Activated CD8-positive, alpha-beta T cell treated with anti-CD3 and anti-CD28 coated beads for 36 hours (primary cell): ENCODE measurements at regions of chr14 and their contacts with region 1.

Region 1: DNA sequence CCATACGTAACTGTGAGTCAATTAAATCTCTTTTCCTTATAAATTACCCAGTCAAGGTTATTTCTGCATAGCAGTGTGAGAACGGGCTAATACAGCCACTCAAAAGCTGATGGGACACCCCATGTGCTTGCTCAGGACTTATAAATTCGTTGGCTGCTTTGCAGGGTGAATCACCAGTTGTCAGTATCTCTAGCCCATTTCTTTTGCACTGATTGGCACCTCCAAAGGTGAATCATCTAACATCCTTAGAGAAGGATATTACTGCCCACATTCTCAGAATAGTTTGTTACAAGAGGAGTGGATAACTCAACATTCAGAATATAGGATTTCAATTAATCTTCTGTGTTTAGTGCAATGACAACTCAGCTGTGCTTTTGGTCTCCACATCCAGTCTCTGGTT is 601.5 kb downstream of the KCNH5 start:
- DNase-seq: no peak
- ATAC-seq: no peak
- H3K4me3 Mint-ChIP-seq: no peak overlapping the region
- H3K27ac Mint-ChIP-seq: no peak overlapping the region
- H3K4me1 Mint-ChIP-seq: no peaks in the 10 kb centered on the region
- H3K27me3 Mint-ChIP-seq: no peaks in the 10 kb centered on the region
- CTCF ChIP-seq: no peak

Region 2: GRCh38 chr14:62497708-62498107 is 53.9 kb after region 1 on chr14:
- CTCF ChIA-PET with region 1: no interaction called
- POLR2A ChIA-PET with region 1: no interaction called
- intact Hi-C with region 1: loop called (anchors 2 kb)
- DNase-seq: no peak
- ATAC-seq: no peak
- H3K4me3 Mint-ChIP-seq: no peak overlapping the region
- H3K27ac Mint-ChIP-seq: no peak overlapping the region
- H3K4me1 Mint-ChIP-seq: no peaks in the 10 kb centered on the region
- H3K27me3 Mint-ChIP-seq: no peaks in the 10 kb centered on the region
- CTCF ChIP-seq: no peak

Region 3: GRCh38 chr14:62604524-62604923 is 160.7 kb after region 1 on chr14:
- CTCF ChIA-PET with region 1: no interaction called
- POLR2A ChIA-PET with region 1: no interaction called
- intact Hi-C with region 1: no loop called
- DNase-seq: no peak
- ATAC-seq: no peak
- H3K4me3 Mint-ChIP-seq: no peak overlapping the region
- H3K27ac Mint-ChIP-seq: no peak overlapping the region
- H3K4me1 Mint-ChIP-seq: no peaks in the 10 kb centered on the region
- H3K27me3 Mint-ChIP-seq: no peaks in the 10 kb centered on the region
- CTCF ChIP-seq: no peak